PC-3 (cell line): ENCODE measurements at regions of chr15 and their contacts with region 1.

Region 1: GRCh38 chr15:77710637-77711036 is 77.9 kb upstream of the LINGO1 start:
- DNase-seq: no peak
- ATAC-seq: no peak
- H3K4me3 ChIP-seq: no peak overlapping the region
- H3K27ac ChIP-seq: no peak overlapping the region
- H3K4me1 ChIP-seq: no peaks in the 10 kb centered on the region
- H3K27me3 ChIP-seq: 0 out of 2 replicates have a peak, but pooled peaks cover 3% of the 10 kb centered on the region
- CTCF ChIP-seq: no peak

Region 2: DNA sequence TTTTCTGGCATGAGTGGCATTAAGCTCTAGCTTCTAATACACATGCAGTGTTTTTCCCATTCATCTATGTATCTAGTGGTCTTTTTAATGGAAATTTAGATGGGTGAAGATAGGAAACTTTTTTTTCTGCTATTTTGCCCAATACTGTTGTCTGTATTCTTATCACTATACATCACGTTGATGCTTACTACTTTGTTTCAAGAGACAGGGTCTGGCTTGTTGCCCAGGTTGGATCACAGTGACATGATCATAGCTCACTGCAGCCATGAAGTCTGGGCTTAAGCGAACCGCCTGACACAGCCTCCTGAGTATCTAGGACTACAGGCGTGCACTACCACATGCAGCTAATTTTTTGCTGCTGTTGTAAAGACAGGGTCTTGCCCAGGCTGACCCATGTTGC is 375.3 kb before region 1 on chr15:
- CTCF ChIA-PET with region 1: no interaction called
- POLR2A ChIA-PET with region 1: interaction called, 18 read pairs
- intact Hi-C with region 1: no loop called
- DNase-seq: no peak
- ATAC-seq: no peak
- H3K4me3 ChIP-seq: no peak overlapping the region
- H3K27ac ChIP-seq: no peak overlapping the region
- H3K4me1 ChIP-seq: no peaks in the 10 kb centered on the region
- H3K27me3 ChIP-seq: no peaks in the 10 kb centered on the region
- CTCF ChIP-seq: no peak

Region 3: DNA sequence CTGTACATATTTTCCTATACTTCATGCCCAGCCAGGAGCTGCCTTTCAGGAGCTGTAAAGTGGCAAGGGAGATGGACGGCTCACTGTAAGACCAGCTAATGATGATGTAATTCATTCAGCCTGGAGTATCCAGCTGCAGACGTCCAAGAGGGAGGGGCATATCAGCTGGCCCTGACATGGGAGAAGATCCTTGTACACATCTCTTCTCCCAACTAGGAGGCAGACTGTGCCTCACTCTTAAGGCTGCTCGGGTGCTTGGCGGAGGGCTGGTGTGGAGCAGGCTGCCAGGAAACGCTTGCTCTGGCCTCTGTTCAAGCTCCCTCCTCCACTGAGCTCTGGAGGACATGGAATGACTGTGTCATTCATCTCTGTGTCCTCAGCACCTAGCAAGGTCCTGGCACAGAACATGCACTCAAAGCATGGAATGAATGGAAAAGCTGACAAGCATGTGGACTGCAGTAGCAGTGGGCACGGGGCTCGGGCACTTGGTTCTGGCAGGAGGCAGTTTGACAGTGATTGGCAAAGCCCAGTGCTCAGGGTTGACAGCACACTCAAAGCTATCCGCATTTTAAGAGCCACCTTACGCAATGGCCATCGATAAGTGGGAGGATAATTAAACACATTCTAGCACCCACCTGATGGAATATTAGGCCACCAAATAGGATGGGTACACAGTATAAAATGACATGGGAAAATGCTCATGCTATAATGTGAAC is 294.4 kb after region 1 on chr15:
- CTCF ChIA-PET with region 1: no interaction called
- POLR2A ChIA-PET with region 1: no interaction called
- intact Hi-C with region 1: no loop called
- DNase-seq: peak; percentile 3
- ATAC-seq: no peak
- H3K4me3 ChIP-seq: no peak overlapping the region
- H3K27ac ChIP-seq: no peak overlapping the region
- H3K4me1 ChIP-seq: peaks cover 23% of the 10 kb centered on the region
- H3K27me3 ChIP-seq: no peaks in the 10 kb centered on the region
- CTCF ChIP-seq: no peak